ENCODE measurements at regions of chr5 and their contacts with region 1.

Region 1: DNA sequence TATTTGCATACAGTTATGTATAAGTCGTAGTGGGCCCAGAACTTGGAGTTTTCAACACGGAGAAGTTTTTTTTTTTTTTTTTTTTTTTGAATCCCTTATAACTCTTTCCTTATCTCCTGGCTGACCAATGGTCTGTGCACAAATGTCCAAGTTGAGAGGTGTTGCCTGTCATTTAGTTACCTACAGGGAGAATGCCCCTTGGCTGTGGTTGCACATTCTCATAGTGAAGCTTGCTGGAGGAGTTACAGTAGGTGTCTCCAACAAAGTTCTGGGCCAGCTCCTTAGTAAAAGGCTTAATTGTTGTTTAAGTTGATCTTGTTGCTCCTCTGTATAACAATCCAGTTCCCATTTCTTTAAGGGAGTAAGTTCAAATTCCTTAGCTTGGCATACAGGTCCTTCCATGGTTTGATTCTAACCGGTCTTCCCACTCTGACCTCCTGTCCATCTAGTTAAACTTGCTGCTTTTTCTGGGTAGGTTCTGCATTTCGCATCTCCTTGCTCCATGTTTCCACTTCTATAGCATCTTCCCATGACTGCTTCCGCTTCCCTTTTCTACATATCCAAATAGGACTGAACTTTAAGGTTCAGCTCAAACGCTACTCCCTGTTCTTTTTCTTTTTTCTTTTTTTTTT is 95.4 kb downstream of the ARHGAP26 start:
- DNase-seq: no peak
- ATAC-seq: no peak
- H3K4me3 ChIP-seq: no peak overlapping the region
- H3K27ac ChIP-seq: no peak overlapping the region
- H3K4me1 ChIP-seq: no peaks in the 10 kb centered on the region
- H3K27me3 ChIP-seq: peaks cover 2 to 26% of the 10 kb centered on the region in 2 experiments; a peak in 2 of 5 replicates
- CTCF ChIP-seq: no peak
- EP300 ChIP-seq: no peak
- POLR2A ChIP-seq: no peak
- RAD21 ChIP-seq: no peak

Region 2: GRCh38 chr5:142748568-142749249 is 116.8 kb before region 1 on chr5:
- CTCF ChIA-PET with region 1: interaction called, 8 read pairs
- POLR2A ChIA-PET with region 1: interaction called, 5 read pairs
- in situ Hi-C with region 1: no loop called
- intact Hi-C with region 1: loop called (anchors 2 kb)
- DNase-seq: peak in 3 of 4 experiments; percentile 23 to 29 (median 23)
- ATAC-seq: peak; percentile 63; the same call in 2 of the 3 replicates
- H3K4me3 ChIP-seq: no peak overlapping the region
- H3K27ac ChIP-seq: no peak overlapping the region
- H3K4me1 ChIP-seq: no peaks in the 10 kb centered on the region
- H3K27me3 ChIP-seq: no peaks in the 10 kb centered on the region
- CTCF ChIP-seq: peak; percentile 66 to 81 (median 66)
- EP300 ChIP-seq: no peak
- POLR2A ChIP-seq: no peak
- RAD21 ChIP-seq: peak; percentile 92 to 96